Heart right ventricle (tissue), 16 donors: ENCODE measurements at regions of chr9 and their contacts with region 1.

Region 1: DNA sequence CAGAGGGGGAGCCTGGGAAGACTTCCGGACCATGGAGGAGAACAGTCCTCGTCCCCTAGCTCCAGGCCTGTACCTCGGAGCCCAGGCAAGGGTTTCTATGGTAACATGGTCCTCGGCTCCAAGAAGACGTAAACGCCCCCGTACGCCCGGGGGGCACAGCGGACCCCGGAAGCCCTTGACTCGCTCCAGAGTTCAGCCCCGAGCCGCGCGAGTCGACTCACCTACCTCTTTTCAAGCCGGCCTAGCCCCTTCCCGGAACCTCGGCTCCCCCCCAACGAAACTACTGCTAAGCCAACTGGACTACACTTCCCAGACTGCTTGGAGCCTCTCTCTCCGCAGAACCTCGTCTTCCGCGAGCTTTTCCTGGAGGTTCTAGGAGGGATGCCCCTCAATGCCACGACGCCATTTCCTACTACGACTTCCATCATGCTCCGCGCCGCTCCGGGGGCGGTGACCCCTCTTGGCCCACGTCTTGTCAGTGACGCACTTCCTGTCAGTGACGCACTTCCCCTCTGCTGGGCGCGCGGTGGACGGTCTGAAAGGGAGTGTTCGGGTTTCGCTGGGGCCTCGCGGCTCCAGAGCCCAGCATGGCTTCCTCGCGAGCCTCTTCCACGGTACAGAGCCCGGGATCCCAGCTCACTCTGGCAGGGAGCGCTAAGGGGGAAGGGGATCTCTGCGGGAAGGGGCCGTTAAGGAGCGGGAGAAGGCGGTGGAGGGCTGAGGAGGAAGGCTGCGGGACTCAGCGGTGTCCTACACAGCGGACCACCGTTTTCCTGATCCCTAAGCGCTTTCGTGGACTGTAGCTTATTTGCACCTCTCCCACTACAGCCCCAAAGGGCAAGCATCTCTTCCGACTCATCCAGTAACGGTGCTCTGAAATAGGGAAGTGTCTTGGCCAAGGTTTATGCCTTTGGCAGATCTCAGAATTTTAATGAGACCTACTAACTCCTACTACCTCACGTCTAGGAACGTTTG is at the starts of genes CDC26 and PRPF4:
- DNase-seq: peak; percentile 96 to 98
- ATAC-seq: peak; percentile 98 to 99 (median 98)
- H3K4me3 ChIP-seq: peak within 1 kb of the TSS; percentile 36 to 89 (median 78)
- H3K27ac ChIP-seq: peak within 1 kb of the TSS; percentile 63 to 95 (median 90)
- H3K4me1 ChIP-seq: peaks cover 5 to 50% (median 23%) of the 10 kb centered on the region in 9 donors
- H3K27me3 ChIP-seq: no peaks in the 10 kb centered on the region
- CTCF ChIP-seq: no peak
- total RNA-seq, gene CDC26: 26.7 to 39.7 (median 30.8) TPM
- total RNA-seq, gene PRPF4: 10.7 to 17.2 (median 13.3) TPM

Region 2: DNA sequence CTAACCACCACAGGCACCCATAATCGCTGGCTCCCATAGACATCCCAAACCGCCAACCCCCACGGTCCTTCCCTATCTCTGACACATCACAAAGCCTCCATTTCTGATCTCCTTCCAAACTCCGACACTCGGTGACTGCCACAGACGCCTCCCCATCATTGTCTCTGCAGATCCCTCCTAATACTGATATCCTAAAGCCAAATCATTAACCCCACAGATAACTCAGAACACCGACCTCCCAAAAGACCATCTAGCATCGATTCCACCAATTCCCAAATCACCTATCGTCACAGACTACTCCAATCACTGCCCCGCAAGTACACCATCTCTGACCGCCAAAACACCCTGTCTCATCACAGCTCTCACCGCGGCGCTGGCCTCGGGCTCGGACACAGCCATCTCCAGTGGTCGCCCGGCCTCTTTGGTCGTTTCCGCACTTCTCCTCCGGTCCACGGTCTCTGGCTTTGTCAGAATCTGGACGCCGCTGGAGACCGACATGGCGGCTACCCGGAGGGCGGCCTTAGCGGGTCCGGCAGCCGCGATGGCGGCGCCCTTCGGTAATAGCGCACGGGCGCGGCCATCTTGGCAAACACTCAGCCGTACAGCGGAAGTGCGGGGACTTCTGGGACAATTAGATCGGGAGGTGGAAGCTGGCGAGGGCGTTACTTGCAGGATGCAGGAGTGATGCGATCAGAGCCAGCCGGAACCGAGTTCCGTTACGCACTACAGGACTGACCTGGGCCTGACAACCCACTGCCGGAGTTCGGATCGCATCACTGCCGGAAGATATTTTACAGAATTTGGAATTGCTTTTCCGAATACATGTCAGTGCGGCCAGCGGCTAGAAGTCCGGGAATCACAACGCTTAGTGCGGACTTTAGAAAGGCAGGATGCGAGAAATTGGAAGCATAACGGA is 219.0 kb before region 1 on chr9 and contains the start of gene ZFP37:
- intact Hi-C with region 1: no loop called
- DNase-seq: peak; percentile 91 to 95
- ATAC-seq: peak; percentile 99 to 100 (median 100)
- H3K4me3 ChIP-seq: peak within 1 kb of the TSS; percentile 48 to 86 (median 70)
- H3K27ac ChIP-seq: peak within 1 kb of the TSS in 9 of 10 donors; percentile 51 to 87 (median 69)
- H3K4me1 ChIP-seq: peaks cover 0 to 15% (median 0%) of the 10 kb centered on the region in 9 donors
- H3K27me3 ChIP-seq: peaks cover 0 to 46% (median 28%) of the 10 kb centered on the region in 7 donors
- CTCF ChIP-seq: no peak
- total RNA-seq, gene ZFP37: 0.67 to 2.3 (median 1.6) TPM

Region 3: DNA sequence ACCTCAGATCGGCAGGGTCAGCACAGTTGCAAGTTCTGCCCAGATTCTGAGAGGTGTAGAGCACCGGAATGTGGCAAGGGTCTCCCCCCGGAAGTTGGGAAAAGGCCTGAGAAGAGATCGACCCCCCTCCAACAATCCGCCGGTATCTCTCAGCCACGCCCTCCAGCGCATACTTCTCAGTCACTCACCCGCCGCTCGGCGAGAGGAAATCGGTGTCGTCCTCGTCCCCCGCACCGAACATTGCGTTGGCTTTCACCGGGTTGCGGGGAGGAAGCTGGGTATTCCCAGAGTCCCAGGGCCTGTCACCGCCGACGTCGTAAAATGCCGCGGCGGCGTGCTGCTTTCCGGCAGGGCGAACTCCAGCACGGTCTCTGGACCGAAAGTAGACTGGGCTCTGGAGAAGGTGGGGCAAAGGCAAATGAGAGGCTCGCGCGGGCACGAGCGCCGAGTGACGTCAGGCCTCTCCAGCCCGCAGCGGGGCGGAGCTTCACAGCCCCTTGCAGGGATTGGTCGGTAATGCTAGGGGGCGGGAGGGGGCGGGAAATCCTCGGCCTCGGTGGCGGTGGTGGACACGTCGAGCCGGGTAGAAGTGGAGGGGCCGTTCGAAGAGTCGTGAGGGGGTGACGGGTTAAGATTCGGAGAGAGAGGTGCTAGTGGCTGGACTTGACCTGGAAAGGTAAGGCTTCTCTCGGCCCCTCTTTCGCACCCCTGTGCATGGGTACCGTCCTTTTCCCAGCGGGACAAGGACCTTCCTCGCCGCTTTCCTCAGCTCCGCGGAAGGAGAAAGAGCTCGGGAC is 54.2 kb before region 1 on chr9 and contains the starts of genes FKBP15 and SLC31A1:
- intact Hi-C with region 1: loop called in 4 of 10 experiments (anchors 2 to 5 kb)
- DNase-seq: peak; percentile 98
- ATAC-seq: peak; percentile 99 to 100 (median 100)
- H3K4me3 ChIP-seq: peak within 1 kb of the TSS; percentile 62 to 93 (median 86)
- H3K27ac ChIP-seq: peak within 1 kb of the TSS; percentile 47 to 96 (median 88)
- H3K4me1 ChIP-seq: peaks cover 11 to 83% (median 53%) of the 10 kb centered on the region in 9 donors
- H3K27me3 ChIP-seq: no peaks in the 10 kb centered on the region
- CTCF ChIP-seq: peak in 1 of 9 donors; percentile 14
- total RNA-seq, gene FKBP15: 16.3 to 27.9 (median 20.1) TPM
- total RNA-seq, gene SLC31A1: 9.3 to 18.4 (median 10.9) TPM

Region 4: DNA sequence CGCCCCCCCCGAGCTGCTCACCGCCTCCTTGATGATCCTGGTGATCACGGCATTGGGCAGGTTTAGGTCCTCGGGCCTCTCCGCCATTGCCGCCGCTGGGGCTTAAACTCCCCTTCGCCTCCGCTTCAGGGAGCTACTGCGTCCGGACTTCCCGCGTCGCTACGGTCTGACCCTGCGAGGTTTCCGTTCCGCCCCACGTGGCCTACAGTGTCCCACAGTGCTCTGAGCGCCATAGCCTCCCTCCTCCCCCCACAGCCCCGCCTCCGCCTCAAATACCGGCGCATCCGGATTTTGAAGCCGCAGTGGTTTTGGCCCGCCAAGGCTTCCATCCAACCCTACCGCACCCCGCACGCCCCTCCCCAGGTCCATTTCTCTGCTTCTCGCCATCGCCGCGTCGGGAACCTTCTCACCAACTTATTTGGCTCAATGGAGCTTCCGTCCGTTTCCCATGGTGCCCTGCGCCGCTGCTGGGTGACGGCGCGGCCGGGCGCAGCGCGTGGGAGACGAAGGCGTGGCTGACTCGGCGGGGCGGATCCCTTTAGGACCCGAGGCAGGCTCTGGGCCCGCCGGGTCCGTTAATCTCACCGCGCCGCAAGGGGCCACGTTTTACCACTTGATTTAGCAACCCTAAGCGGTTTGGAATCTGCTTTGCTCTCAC is 134.9 kb after region 1 on chr9 and contains the starts of genes C9orf43 and POLE3:
- intact Hi-C with region 1: loop called in 7 of 10 experiments (anchors 5 to 10 kb)
- DNase-seq: peak; percentile 95
- ATAC-seq: peak; percentile 97 to 99 (median 98)
- H3K4me3 ChIP-seq: peak within 1 kb of the TSS; percentile 71 to 94 (median 80)
- H3K27ac ChIP-seq: peak within 1 kb of the TSS; percentile 88 to 98 (median 96)
- H3K4me1 ChIP-seq: peaks cover 2 to 31% (median 25%) of the 10 kb centered on the region in 9 donors
- H3K27me3 ChIP-seq: no peaks in the 10 kb centered on the region
- CTCF ChIP-seq: peak in 2 of 9 donors; percentile 18 to 25
- total RNA-seq, gene C9orf43: 0.17 to 1.1 (median 0.31) TPM in 8 of 10 donors, not detected in the others
- total RNA-seq, gene POLE3: 19.0 to 26.9 (median 23.1) TPM